MCF 10A (cell line): ENCODE measurements at regions of chr1 and their contacts with region 1.

Region 1: DNA sequence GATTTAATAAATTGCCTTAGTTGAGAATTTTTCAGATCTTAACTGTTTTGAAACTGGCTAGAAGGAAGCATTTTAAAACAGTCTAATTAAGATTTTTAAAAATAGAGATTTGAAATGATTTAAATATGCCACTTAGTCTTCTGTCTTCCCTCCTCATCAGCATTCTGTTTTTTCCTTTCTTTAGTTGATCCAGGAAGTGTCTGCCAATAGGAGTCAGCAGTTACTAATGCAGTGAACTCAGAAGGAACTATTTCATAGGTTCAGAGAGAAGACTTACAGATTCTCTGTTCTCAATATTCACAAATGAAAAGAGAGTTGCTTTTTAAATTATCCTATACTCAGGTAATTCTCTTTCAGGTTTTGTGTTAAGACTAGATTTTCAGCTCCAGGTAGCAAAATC is 84.5 kb downstream of the RPS6KC1 start:
- DNase-seq: no peak
- H3K4me3 Mint-ChIP-seq: no peak overlapping the region
- H3K27ac Mint-ChIP-seq: no peak overlapping the region
- H3K4me1 Mint-ChIP-seq: no peaks in the 10 kb centered on the region
- H3K27me3 Mint-ChIP-seq: no peaks in the 10 kb centered on the region
- CTCF ChIP-seq: no peak

Region 2: DNA sequence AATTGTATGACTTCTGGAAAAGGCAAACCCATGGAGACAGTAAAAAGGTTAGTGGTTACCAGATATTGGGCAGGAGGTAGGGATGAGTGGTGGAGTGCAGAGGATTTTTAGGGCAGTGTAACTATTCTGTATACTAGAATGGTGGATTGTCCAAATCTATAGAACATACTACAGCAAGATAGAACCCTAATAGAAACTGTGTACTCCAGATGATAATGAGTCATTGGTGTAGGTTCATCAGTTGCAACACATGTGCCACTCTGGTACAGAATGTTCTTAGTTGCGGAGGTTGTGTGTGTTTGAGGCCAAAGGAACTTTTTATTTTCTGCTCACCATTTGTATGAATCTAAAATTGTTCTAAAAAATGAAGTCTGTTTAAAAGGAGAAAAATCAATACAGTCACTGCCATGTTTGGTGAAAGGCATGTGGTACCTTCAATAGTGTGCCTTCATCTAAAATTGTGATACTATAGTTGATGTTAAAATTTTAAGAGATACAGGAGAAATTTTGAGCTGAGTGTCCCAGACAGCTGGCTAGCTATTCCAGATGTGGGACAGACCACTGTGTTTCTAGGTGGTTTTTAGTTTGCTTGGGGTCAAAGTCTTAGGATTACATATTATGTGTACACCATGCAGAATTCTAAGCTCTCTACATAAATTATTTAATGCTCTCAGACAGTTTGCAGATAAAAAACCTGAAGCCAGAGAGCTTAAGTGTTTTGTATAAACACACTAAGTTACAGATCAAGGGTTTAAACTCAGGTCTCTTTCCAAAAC is 66.0 kb after region 1 on chr1:
- CTCF ChIA-PET with region 1: no interaction called
- POLR2A ChIA-PET with region 1: no interaction called
- intact Hi-C with region 1: no loop called
- DNase-seq: peak; percentile 90
- H3K4me3 Mint-ChIP-seq: peak overlapping the region; percentile 50
- H3K27ac Mint-ChIP-seq: peak overlapping the region; percentile 98
- H3K4me1 Mint-ChIP-seq: peaks cover 28% of the 10 kb centered on the region
- H3K27me3 Mint-ChIP-seq: no peaks in the 10 kb centered on the region
- CTCF ChIP-seq: no peak

Region 3: GRCh38 chr1:213286235-213286634 is 150.7 kb after region 1 on chr1:
- CTCF ChIA-PET with region 1: interaction called, 3 read pairs
- POLR2A ChIA-PET with region 1: no interaction called
- intact Hi-C with region 1: loop called (anchors 5 kb)
- DNase-seq: peak; percentile 21
- H3K4me3 Mint-ChIP-seq: no peak overlapping the region
- H3K27ac Mint-ChIP-seq: no peak overlapping the region
- H3K4me1 Mint-ChIP-seq: peaks cover 12% of the 10 kb centered on the region
- H3K27me3 Mint-ChIP-seq: no peaks in the 10 kb centered on the region
- CTCF ChIP-seq: peak; percentile 11